Activated T-helper 1 cell treated with anti-CD3 and anti-CD28 coated beads, Interleukin-12 subunit alpha, Interleukin-12 subunit beta, Interleukin-2, Interleukin-4 antibody, amounts not matched to agents 30 ng/mL and 10 ng/mL and 1 ng/mL, durations not matched to agents 14 hours and 24 hours and 36 hours (primary cell): ENCODE measurements at regions of chr15 and their contacts with region 1.

Region 1: DNA sequence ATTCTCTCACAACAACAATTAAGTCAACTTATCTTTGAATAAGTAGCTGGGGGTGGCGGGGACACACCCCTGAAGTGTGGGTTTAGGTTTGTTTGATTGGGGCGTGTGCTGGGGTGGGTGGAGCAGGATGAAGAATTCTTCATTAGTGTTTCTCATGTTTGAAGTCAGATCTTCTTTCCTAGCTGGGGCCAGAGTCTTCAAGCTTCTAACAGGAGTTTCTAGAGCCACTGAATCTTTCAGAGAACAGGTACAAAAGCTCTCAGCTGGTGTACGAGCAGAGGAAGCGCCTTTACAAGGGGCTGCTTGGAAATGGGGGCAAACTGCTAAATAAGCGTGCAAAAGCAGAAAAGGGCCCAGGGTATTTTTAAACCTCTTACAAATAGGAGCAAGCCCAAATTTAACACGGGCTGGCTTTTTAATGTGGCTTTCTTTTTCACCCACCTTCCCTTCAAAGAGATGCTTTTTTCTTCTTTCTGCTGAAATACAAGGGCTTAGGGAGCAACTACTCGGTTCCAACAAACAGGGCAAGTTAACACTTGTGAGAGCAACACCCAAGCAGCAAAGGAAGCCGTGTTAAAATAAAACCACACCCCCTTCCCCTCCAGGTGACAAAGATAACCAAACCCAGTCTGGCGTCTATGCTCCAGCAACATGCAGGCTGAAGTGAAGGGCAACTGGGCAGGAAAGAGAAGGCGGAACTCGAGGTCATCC is 86.9 kb upstream of the RASGRP1 start:
- DNase-seq: peak; percentile 57
- H3K4me3 Mint-ChIP-seq: peak overlapping the region; percentile 79
- H3K27ac Mint-ChIP-seq: peak overlapping the region; percentile 94
- H3K4me1 Mint-ChIP-seq: peaks cover 93% of the 10 kb centered on the region
- H3K27me3 Mint-ChIP-seq: no peaks in the 10 kb centered on the region

Region 2: GRCh38 chr15:38154837-38155236 is 496.6 kb before region 1 on chr15:
- intact Hi-C with region 1: no loop called
- DNase-seq: no peak
- H3K4me3 Mint-ChIP-seq: no peak overlapping the region
- H3K27ac Mint-ChIP-seq: no peak overlapping the region
- H3K4me1 Mint-ChIP-seq: no peaks in the 10 kb centered on the region
- H3K27me3 Mint-ChIP-seq: peaks cover 11% of the 10 kb centered on the region

Region 3: DNA sequence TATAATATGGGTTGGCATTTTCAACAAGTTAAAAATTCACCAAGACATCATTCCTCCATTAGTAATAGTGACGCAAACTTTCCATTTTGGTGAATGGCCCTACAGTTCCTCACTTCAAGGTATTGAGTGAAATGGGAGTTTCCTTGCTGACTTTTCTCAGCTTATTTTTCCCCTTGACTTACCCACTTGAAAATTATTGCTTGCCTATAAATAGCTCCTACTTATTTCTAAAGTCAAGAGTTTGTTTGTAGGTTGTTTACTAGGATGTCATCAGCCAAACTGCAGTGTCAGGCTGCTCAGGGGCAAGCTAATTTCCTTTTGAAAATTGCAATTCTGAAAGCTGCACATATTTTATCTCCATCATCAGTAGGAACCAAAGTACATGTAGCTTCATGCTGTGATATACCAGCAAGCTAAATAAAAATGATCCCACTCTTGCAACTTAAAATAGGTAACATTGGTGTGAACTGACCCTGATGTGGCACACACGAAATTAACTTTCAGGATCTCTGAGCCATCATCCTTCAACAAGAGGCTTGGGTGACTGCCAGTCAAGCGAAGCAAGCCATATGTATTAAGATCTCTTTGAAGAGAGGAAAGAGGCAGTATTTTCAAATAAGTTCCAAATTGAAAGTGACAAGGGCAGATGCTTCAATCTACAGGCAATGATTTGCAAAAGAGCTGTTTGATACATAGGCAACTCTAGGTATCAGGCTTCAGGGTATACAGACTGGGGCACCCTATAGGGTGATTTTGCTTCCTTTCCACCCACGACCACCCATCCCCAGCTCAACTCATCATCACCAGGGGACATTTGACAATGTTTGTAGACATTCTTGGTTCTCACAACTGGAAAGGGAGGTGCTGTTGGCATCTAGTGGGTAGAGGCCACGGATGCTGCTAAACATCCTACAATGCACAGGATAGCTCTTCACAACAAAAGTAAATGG is 20.1 kb before region 1 on chr15:
- intact Hi-C with region 1: loop called (anchors 1 kb)
- DNase-seq: no peak
- H3K4me3 Mint-ChIP-seq: peak overlapping the region; percentile 62
- H3K27ac Mint-ChIP-seq: peak overlapping the region; percentile 91
- H3K4me1 Mint-ChIP-seq: peaks cover 63% of the 10 kb centered on the region
- H3K27me3 Mint-ChIP-seq: no peaks in the 10 kb centered on the region

Region 4: GRCh38 chr15:38683382-38684242 is 32.1 kb after region 1 on chr15:
- intact Hi-C with region 1: loop called (anchors 1 kb)
- DNase-seq: peak; percentile 57
- H3K4me3 Mint-ChIP-seq: peak overlapping the region; percentile 65
- H3K27ac Mint-ChIP-seq: peak overlapping the region; percentile 95
- H3K4me1 Mint-ChIP-seq: peaks cover 80% of the 10 kb centered on the region
- H3K27me3 Mint-ChIP-seq: no peaks in the 10 kb centered on the region